Naive thymus-derived CD4-positive, alpha-beta T cell (primary cell): ENCODE measurements at regions of chr14 and their contacts with region 1.

Region 1: GRCh38 chr14:63759456-63759855 is 31.6 kb upstream of the SGPP1 start:
- DNase-seq: peak in 7 of 9 donors; percentile 24 to 61 (median 50)
- ATAC-seq: peak; percentile 89
- H3K4me3 ChIP-seq: peak overlapping the region; percentile 2
- H3K4me3 Mint-ChIP-seq: peak overlapping the region; percentile 57 to 89 (median 82)
- H3K27ac ChIP-seq: peak overlapping the region; percentile 75
- H3K27ac Mint-ChIP-seq: peak overlapping the region; percentile 84 to 98 (median 93)
- H3K4me1 ChIP-seq: peaks cover 4 to 8% of the 10 kb centered on the region in 2 donors
- H3K4me1 Mint-ChIP-seq: peaks cover 11 to 19% (median 17%) of the 10 kb centered on the region in 7 donors
- H3K27me3 ChIP-seq: no peaks in the 10 kb centered on the region
- H3K27me3 Mint-ChIP-seq: no peaks in the 10 kb centered on the region

Region 2: DNA sequence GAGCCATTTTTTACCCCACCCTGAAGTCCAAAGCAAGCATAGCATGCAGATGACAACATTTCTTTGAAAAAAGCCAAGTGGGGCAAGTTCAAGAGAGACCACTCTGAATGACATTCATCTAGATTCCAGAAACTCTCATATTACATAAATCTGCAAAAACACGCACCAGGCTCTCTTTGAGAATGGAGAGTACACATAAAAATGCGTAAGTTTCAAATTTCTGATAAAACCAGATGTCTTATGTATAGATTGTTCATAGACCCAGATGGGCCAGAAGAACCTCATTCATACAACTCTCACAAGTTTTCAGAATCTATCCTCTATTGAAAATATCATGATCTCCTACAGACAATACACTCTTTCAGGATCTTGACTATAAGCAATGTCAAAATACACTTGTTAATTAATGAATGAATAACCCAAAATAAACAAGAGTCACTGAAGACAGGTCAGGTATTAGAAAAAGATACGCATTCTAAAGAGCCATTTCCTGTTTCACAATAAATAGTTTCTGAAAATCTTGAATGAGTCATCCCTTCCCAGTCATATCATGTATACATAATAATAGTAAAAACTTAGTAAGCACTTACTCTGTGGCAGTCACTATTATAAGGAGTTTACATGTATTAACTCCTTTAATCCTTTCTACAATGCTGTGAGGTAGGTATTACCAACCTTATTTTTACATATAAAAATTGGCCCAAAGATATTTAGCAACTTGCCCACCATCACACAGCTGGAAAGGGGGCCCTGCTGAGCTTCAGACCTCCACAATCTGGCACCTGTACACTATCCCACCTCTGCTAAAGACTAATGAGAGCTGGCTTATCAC is 288.3 kb before region 1 on chr14:
- CTCF ChIA-PET with region 1: no interaction called
- POLR2A ChIA-PET with region 1: no interaction called
- intact Hi-C with region 1: loop called in 1 of 2 experiments (anchors 10 kb)
- DNase-seq: no peak
- ATAC-seq: peak; percentile 60
- H3K4me3 ChIP-seq: no peak overlapping the region
- H3K4me3 Mint-ChIP-seq: peak overlapping the region in 5 of 10 donors; percentile 2 to 60 (median 34)
- H3K27ac ChIP-seq: no peak overlapping the region
- H3K27ac Mint-ChIP-seq: peak overlapping the region in 4 of 9 donors; percentile 5 to 74 (median 38)
- H3K4me1 ChIP-seq: peaks cover 7 to 24% of the 10 kb centered on the region in 2 donors
- H3K4me1 Mint-ChIP-seq: peaks cover 32 to 58% (median 50%) of the 10 kb centered on the region in 7 donors
- H3K27me3 ChIP-seq: no peaks in the 10 kb centered on the region
- H3K27me3 Mint-ChIP-seq: no peaks in the 10 kb centered on the region

Region 3: GRCh38 chr14:63737582-63738006 is 21.9 kb before region 1 on chr14:
- CTCF ChIA-PET with region 1: no interaction called
- POLR2A ChIA-PET with region 1: interaction called, 4 read pairs
- intact Hi-C with region 1: loop called in 1 of 2 experiments (anchors 1 kb)
- DNase-seq: peak in 1 of 9 donors; percentile 8
- ATAC-seq: no peak
- H3K4me3 ChIP-seq: peak overlapping the region; percentile 38
- H3K4me3 Mint-ChIP-seq: peak overlapping the region; percentile 23 to 82 (median 76)
- H3K27ac ChIP-seq: no peak overlapping the region
- H3K27ac Mint-ChIP-seq: peak overlapping the region; percentile 36 to 95 (median 90)
- H3K4me1 ChIP-seq: peaks cover 0 to 3% of the 10 kb centered on the region in 2 donors
- H3K4me1 Mint-ChIP-seq: peaks cover 8 to 16% (median 14%) of the 10 kb centered on the region in 7 donors
- H3K27me3 ChIP-seq: no peaks in the 10 kb centered on the region
- H3K27me3 Mint-ChIP-seq: peaks cover 0 to 6% (median 0%) of the 10 kb centered on the region in 5 donors